ENCODE measurements at regions of chr17 and their contacts with region 1.

Region 1: DNA sequence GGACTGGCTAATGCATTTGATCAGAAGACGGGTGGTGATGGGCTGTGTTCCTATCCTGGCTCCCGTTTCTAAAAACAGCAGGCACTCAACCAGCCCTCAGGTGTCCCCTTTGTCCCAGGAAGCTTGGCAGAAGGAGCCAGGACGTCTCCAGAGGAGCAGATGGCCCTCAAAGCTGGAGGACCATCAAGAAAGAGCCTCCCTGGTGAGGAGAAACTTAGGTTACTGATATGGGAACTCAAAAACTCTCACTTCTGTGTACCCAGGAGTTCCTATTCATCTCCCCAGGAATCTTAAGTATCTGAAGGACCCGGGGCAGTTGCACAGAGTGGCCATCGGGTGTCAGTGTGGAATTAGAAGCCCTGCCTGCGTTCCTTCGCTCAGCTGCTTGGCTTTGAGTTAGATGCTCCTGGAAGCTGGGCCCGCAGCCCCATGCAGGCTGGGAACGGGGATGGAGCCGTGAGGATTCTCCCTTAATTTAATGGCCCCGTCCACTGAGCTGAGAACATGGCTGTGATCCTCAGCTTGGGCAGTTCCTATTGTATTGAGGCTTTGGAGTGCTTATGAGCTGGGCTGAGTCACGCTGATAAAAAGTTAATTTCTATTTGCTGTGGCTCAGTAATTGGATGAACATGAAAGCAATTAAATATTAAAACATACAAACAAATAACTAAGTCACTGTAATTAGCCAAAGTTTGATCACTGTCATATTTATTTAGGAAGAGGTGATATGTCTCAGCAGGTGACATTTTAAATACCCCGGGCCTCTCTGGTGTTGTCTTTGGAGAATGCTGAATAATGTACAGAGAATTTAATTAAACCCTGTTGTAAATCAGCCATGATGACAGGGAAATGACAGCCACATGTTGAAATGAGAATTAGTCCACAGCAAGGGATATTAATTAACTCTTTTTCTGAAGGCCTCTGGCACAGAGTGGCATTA is 402.1 kb downstream of the SEC14L1 start:
- DNase-seq: peak; percentile 49
- H3K4me3 Mint-ChIP-seq: no peak overlapping the region
- H3K27ac Mint-ChIP-seq: no peak overlapping the region
- H3K4me1 Mint-ChIP-seq: peaks cover 10% of the 10 kb centered on the region
- H3K27me3 Mint-ChIP-seq: peaks cover 12% of the 10 kb centered on the region

Region 2: GRCh38 chr17:77345260-77345910 is 197.4 kb before region 1 on chr17:
- intact Hi-C with region 1: no loop called
- DNase-seq: no peak
- H3K4me3 Mint-ChIP-seq: no peak overlapping the region
- H3K27ac Mint-ChIP-seq: no peak overlapping the region
- H3K4me1 Mint-ChIP-seq: peaks cover 36% of the 10 kb centered on the region
- H3K27me3 Mint-ChIP-seq: no peaks in the 10 kb centered on the region

Region 3: DNA sequence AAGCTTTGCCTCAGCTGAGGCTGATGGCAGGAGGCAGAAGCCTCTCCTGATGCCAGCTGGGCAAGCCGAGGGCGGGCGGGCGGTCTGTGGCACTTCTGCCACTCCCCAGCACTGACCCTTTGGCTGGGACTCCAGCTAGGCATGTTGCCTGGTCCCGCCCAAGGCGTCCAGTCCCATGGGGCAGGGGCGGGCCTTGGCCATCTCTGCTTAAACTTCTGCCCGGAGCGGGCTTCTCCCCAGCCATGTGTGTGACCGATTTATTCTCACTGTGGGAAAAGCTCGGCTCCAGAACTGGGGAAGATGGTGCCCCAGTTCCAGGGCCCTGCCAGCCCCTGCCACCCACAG is 52.9 kb before region 1 on chr17:
- intact Hi-C with region 1: no loop called
- DNase-seq: no peak
- H3K4me3 Mint-ChIP-seq: no peak overlapping the region
- H3K27ac Mint-ChIP-seq: no peak overlapping the region
- H3K4me1 Mint-ChIP-seq: peaks cover 10% of the 10 kb centered on the region
- H3K27me3 Mint-ChIP-seq: no peaks in the 10 kb centered on the region

Region 4: GRCh38 chr17:77772461-77772897 is 229.7 kb after region 1 on chr17:
- intact Hi-C with region 1: loop called (anchors 5 kb)
- DNase-seq: peak; percentile 43
- H3K4me3 Mint-ChIP-seq: no peak overlapping the region
- H3K27ac Mint-ChIP-seq: no peak overlapping the region
- H3K4me1 Mint-ChIP-seq: peaks cover 12% of the 10 kb centered on the region
- H3K27me3 Mint-ChIP-seq: peaks cover 14% of the 10 kb centered on the region